Activated CD8-positive, alpha-beta T cell treated with anti-CD3 and anti-CD28 coated beads, Interleukin-2, amount 10 ng/mL, durations not matched to agents 7 days and 5 days (primary cell): ENCODE measurements at regions of chr15 and their contacts with region 1.

Region 1: GRCh38 chr15:59104912-59105732 is at the start of gene CCNB2:
- DNase-seq: peak; percentile 94
- ATAC-seq: peak; percentile 100
- H3K4me3 Mint-ChIP-seq: peak within 1 kb of the TSS; percentile 98
- H3K27ac Mint-ChIP-seq: peak within 1 kb of the TSS; percentile 98
- H3K4me1 Mint-ChIP-seq: peaks cover 42% of the 10 kb centered on the region
- H3K27me3 Mint-ChIP-seq: no peaks in the 10 kb centered on the region
- total RNA-seq, gene CCNB2: 107 to 112 TPM

Region 2: DNA sequence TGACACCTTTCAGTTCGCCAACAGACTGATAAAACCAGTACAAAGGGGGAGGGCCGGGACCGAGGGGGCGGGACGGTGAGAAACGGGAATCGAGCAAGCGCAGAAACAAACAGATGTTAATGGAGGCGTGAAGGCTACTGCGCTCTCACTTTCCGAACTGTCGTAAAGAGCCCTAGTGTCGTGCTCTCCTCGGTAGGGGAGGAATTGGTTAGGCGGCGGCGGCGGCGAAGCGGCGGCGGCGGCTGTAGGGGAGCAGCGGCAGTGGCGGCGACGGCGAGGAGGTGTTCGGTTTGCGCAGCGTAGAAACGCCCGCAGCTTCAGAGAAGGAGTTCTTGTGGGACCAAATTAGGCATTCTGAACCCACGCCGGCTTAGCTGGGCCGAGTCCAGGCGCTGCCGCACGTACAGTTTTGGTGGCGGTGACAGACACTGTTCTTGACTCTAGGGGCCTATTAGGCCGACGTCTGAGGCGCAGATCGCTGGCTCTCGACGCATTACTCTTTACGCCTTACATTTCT is 117.6 kb before region 1 on chr15 and contains the start of gene RNF111:
- CTCF ChIA-PET with region 1: interaction called, 3 read pairs
- POLR2A ChIA-PET with region 1: interaction called, 12 read pairs
- DNase-seq: peak; percentile 95
- ATAC-seq: peak; percentile 92
- H3K4me3 Mint-ChIP-seq: peak within 1 kb of the TSS; percentile 94
- H3K27ac Mint-ChIP-seq: peak within 1 kb of the TSS; percentile 86
- H3K4me1 Mint-ChIP-seq: peaks cover 49% of the 10 kb centered on the region
- H3K27me3 Mint-ChIP-seq: peaks cover 4% of the 10 kb centered on the region
- total RNA-seq, gene RNF111: 36.7 to 38.9 TPM

Region 3: DNA sequence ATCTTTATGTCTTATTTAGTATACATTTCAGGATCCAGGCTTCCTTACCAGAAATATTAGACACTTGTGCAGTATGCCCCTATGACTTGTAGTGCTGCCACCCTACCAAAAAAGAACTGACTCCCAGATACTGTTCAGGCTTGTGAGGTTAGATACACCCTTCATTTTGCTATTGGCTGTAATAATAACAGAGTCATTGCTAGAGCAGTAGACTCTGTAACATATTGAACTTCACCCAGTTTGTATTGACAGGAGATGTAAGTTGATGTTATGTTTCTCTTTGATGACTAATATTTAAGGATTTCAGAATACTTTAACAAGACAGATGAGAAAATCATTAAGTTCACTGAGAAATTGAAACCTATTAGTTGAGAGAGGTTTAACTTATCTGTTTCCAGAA is 84.8 kb before region 1 on chr15:
- CTCF ChIA-PET with region 1: no interaction called
- POLR2A ChIA-PET with region 1: no interaction called
- DNase-seq: no peak
- ATAC-seq: no peak
- H3K4me3 Mint-ChIP-seq: no peak overlapping the region
- H3K27ac Mint-ChIP-seq: no peak overlapping the region
- H3K4me1 Mint-ChIP-seq: peaks cover 9% of the 10 kb centered on the region
- H3K27me3 Mint-ChIP-seq: no peaks in the 10 kb centered on the region